Panc1 (cell line): ENCODE measurements at regions of chr12 and their contacts with region 1.

Region 1: GRCh38 chr12:17778242-17778641 is 311.8 kb downstream of the RERGL start:
- DNase-seq: no peak
- ATAC-seq: no peak
- H3K4me3 ChIP-seq: no peak overlapping the region
- H3K27ac ChIP-seq: no peak overlapping the region
- H3K4me1 ChIP-seq: no peaks in the 10 kb centered on the region
- H3K27me3 ChIP-seq: no peaks in the 10 kb centered on the region
- CTCF ChIP-seq: no peak

Region 2: GRCh38 chr12:17866802-17867201 is 88.6 kb after region 1 on chr12:
- CTCF ChIA-PET with region 1: no interaction called
- POLR2A ChIA-PET with region 1: no interaction called
- in situ Hi-C with region 1: no loop called
- intact Hi-C with region 1: loop called (anchors 5 kb)
- DNase-seq: no peak
- ATAC-seq: no peak
- H3K4me3 ChIP-seq: no peak overlapping the region
- H3K27ac ChIP-seq: no peak overlapping the region
- H3K4me1 ChIP-seq: no peaks in the 10 kb centered on the region
- H3K27me3 ChIP-seq: no peaks in the 10 kb centered on the region
- CTCF ChIP-seq: no peak